ENCODE measurements at regions of chr21 and their contacts with region 1.

Region 1: GRCh38 chr21:34967509-34968289 is 81.4 kb downstream of the RUNX1 start:
- DNase-seq: peak; percentile 77
- H3K4me3 Mint-ChIP-seq: peak overlapping the region; percentile 79
- H3K27ac Mint-ChIP-seq: peak overlapping the region; percentile 96
- H3K4me1 Mint-ChIP-seq: peaks cover 81% of the 10 kb centered on the region
- H3K27me3 Mint-ChIP-seq: peaks cover 9% of the 10 kb centered on the region

Region 2: GRCh38 chr21:34822942-34823341 is 144.8 kb before region 1 on chr21:
- intact Hi-C with region 1: no loop called
- DNase-seq: no peak
- H3K4me3 Mint-ChIP-seq: no peak overlapping the region
- H3K27ac Mint-ChIP-seq: no peak overlapping the region
- H3K4me1 Mint-ChIP-seq: peaks cover 13% of the 10 kb centered on the region
- H3K27me3 Mint-ChIP-seq: no peaks in the 10 kb centered on the region

Region 3: GRCh38 chr21:34933609-34934335 is 33.9 kb before region 1 on chr21:
- intact Hi-C with region 1: loop called (anchors 5 kb)
- DNase-seq: peak; percentile 83
- H3K4me3 Mint-ChIP-seq: peak overlapping the region; percentile 78
- H3K27ac Mint-ChIP-seq: peak overlapping the region; percentile 85
- H3K4me1 Mint-ChIP-seq: peaks cover 72% of the 10 kb centered on the region
- H3K27me3 Mint-ChIP-seq: no peaks in the 10 kb centered on the region

Region 4: DNA sequence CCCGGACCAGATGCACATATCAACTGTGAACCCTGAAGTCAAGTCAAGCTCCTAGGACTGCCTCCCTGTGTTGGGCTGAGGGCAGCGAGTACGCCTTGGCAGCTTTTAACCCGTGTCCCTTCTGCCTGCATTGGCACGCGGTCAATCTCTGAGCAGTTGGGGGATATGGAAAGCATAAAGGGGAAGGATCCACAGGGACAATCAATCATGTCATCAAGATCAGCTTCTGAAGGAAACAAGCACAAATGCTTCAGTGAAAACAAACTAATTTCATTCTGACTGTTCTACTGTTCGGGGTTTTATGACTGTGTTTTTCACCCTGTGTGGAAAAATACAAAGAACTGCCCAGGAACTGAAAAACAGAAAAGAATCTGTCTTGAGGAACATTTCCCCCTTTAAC is 24.8 kb before region 1 on chr21:
- intact Hi-C with region 1: loop called (anchors 1 kb)
- DNase-seq: no peak
- H3K4me3 Mint-ChIP-seq: peak overlapping the region; percentile 47
- H3K27ac Mint-ChIP-seq: peak overlapping the region; percentile 94
- H3K4me1 Mint-ChIP-seq: peaks cover 75% of the 10 kb centered on the region
- H3K27me3 Mint-ChIP-seq: no peaks in the 10 kb centered on the region

Region 5: DNA sequence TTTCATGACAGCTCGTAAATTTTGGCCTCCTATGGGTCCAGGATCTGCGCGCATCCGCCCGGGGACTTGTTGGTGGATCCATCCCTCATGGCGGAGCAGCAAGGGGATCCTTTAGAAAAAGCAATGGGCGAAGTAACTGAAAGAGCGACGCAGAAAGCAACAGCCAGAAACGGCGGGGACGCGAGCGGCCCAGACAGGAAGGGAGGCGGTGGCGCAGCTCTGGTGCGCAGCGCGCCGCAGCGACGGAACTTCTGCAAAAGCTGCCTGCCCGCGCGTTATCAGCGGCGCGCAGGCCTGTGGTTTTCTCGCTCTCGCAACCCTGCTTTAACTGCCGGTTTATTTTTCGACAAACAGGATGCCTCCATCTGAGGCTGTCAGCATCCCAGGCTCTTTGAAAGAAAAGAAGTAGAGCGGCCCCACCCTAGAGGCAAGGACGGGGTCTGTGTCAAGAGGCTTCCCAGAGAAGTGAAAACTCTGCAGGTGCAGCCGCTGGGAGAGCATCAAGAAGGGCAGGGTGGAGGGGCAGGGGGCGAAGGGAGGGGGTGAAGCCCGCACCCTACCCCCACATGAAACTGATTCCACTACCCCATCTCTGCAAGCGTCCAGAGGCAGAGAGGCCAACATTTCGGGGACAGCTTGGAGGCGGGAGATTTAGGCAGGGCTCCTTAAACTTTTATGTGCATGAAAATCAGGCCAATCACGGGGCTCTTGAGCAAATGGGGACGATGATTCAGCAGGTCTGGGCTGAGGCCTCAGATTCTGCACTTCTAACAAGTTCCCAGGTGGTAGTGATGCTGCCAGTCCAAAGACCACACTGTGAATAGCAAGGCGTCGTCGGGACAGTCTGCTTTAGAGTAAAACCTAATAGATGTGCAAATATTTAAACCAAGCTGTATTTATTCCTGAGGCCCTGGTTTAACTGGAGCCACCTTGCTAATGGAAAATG is 59.2 kb after region 1 on chr21:
- intact Hi-C with region 1: loop called (anchors 1 kb)
- DNase-seq: peak; percentile 96
- H3K4me3 Mint-ChIP-seq: peak overlapping the region; percentile 81
- H3K27ac Mint-ChIP-seq: peak overlapping the region; percentile 99
- H3K4me1 Mint-ChIP-seq: peaks cover 73% of the 10 kb centered on the region
- H3K27me3 Mint-ChIP-seq: no peaks in the 10 kb centered on the region

Region 6: GRCh38 chr21:35045542-35046262 is 78.0 kb after region 1 on chr21:
- intact Hi-C with region 1: loop called (anchors 1 kb)
- DNase-seq: peak; percentile 86
- H3K4me3 Mint-ChIP-seq: peak overlapping the region; percentile 89
- H3K27ac Mint-ChIP-seq: peak overlapping the region; percentile 94
- H3K4me1 Mint-ChIP-seq: peaks cover 96% of the 10 kb centered on the region
- H3K27me3 Mint-ChIP-seq: peaks cover 3% of the 10 kb centered on the region

Measured in activated CD4-positive, alpha-beta T cell treated with anti-CD3 and anti-CD28 coated beads, Interleukin-2, amount 10 ng/mL, durations not matched to agents 24 days and 14 days (primary cell).